MCF 10A (cell line): ENCODE measurements at regions of chrX and their contacts with region 1.

Region 1: DNA sequence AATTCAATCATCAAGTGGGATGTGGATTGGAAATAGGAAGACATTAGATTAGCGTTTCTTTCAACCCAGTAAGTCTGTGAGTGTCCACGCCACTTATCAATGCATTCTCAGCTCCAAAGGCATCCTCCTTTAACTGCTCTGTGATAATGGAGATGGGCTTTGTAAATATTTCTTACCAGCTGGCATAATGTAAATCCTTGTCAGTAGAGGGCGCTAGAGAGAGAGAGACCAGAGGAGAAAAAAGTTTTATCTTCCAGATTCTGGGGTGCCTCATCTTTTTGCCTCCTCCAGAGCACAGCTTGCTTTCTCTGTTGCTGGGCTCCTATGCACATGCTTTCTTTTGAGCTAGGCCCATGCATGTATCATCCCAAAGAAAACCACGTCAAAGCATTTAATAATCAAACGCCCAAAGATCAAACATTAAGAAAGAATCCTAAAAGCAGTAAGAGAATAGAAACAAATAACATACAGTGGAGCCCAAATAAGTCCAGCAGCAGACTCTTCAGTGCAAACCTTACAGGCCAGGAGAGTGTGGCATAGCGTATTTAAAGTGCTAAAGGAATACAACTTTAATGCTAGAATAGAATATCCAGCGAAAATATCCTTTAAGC is 9.6 kb upstream of the MTMR1 start:
- DNase-seq: peak; percentile 71
- H3K4me3 Mint-ChIP-seq: no peak overlapping the region
- H3K27ac Mint-ChIP-seq: no peak overlapping the region
- H3K4me1 Mint-ChIP-seq: no peaks in the 10 kb centered on the region
- H3K27me3 Mint-ChIP-seq: peaks cover 10% of the 10 kb centered on the region
- CTCF ChIP-seq: peak; percentile 54

Region 2: GRCh38 chrX:149950681-149951080 is 733.0 kb before region 1 on chrX:
- CTCF ChIA-PET with region 1: interaction called, 4 read pairs
- POLR2A ChIA-PET with region 1: no interaction called
- intact Hi-C with region 1: loop called (anchors 1 kb)
- DNase-seq: peak; percentile 65
- H3K4me3 Mint-ChIP-seq: no peak overlapping the region
- H3K27ac Mint-ChIP-seq: no peak overlapping the region
- H3K4me1 Mint-ChIP-seq: no peaks in the 10 kb centered on the region
- H3K27me3 Mint-ChIP-seq: peaks cover 16% of the 10 kb centered on the region
- CTCF ChIP-seq: peak; percentile 56

Region 3: DNA sequence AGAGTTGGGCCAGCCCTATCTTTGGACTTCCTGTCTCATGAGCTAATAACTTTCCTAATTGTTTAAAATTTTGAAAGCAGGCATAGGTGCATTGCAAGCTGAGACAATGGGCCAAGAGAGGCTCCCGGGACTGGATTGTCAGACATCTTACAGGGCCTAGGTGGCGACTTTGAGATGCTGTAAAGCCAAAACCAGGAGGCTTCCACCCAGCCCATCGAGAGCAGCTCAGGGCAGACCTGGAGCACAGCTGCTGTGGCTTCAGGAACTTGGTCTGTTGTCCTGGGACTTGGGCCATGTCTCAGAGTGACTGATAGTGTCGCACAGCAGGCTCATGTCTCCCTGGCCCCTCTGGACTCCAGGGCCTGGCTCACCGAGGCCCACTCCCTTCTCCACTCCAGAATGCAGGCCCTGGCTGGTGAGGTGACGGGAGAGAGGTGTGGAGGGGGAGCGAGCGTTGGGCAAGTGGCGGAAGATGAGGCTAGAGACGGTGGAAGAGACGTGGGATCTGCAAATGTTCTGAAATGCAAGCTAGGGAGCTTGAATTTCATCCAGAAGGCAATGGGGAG is 139.3 kb before region 1 on chrX:
- CTCF ChIA-PET with region 1: no interaction called
- POLR2A ChIA-PET with region 1: no interaction called
- intact Hi-C with region 1: loop called (anchors 1 kb)
- DNase-seq: peak; percentile 45
- H3K4me3 Mint-ChIP-seq: no peak overlapping the region
- H3K27ac Mint-ChIP-seq: no peak overlapping the region
- H3K4me1 Mint-ChIP-seq: peaks cover 11% of the 10 kb centered on the region
- H3K27me3 Mint-ChIP-seq: peaks cover 2% of the 10 kb centered on the region
- CTCF ChIP-seq: no peak

Region 4: GRCh38 chrX:150693775-150694574 is 10.3 kb after region 1 on chrX:
- CTCF ChIA-PET with region 1: interaction called, 11 read pairs
- POLR2A ChIA-PET with region 1: interaction called, 3 read pairs
- intact Hi-C with region 1: no loop called
- DNase-seq: peak; percentile 66
- H3K4me3 Mint-ChIP-seq: peak overlapping the region; percentile 75
- H3K27ac Mint-ChIP-seq: peak overlapping the region; percentile 69
- H3K4me1 Mint-ChIP-seq: peaks cover 14% of the 10 kb centered on the region
- H3K27me3 Mint-ChIP-seq: peaks cover 14% of the 10 kb centered on the region
- CTCF ChIP-seq: no peak

Region 5: DNA sequence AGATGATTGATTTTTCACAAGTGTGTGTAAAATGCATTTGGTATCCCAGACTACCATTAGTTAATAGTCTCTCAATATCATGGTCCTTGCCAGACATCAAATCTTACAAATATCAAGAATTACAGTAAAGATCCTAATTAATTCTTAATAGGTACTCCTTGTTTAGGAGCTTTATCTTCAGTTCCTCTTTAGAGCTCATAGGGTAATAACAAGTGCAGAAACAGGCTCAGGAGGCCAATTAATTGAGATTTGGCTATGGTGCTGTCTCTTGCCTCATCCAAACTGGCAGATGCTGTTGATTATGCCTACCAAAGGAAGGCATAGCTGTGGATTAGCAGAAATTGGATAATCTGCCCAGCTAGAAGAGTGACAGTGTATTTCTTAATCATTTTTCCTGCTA is 16.5 kb after region 1 on chrX:
- CTCF ChIA-PET with region 1: interaction called, 13 read pairs
- POLR2A ChIA-PET with region 1: no interaction called
- intact Hi-C with region 1: no loop called
- DNase-seq: no peak
- H3K4me3 Mint-ChIP-seq: no peak overlapping the region
- H3K27ac Mint-ChIP-seq: no peak overlapping the region
- H3K4me1 Mint-ChIP-seq: peaks cover 8% of the 10 kb centered on the region
- H3K27me3 Mint-ChIP-seq: peaks cover 17% of the 10 kb centered on the region
- CTCF ChIP-seq: no peak

Region 6: GRCh38 chrX:150715184-150715583 is 31.5 kb after region 1 on chrX:
- CTCF ChIA-PET with region 1: interaction called, 10 read pairs
- POLR2A ChIA-PET with region 1: interaction called, 6 read pairs
- intact Hi-C with region 1: loop called (anchors 1 kb)
- DNase-seq: peak; percentile 15
- H3K4me3 Mint-ChIP-seq: no peak overlapping the region
- H3K27ac Mint-ChIP-seq: no peak overlapping the region
- H3K4me1 Mint-ChIP-seq: no peaks in the 10 kb centered on the region
- H3K27me3 Mint-ChIP-seq: peaks cover 19% of the 10 kb centered on the region
- CTCF ChIP-seq: no peak

Region 7: GRCh38 chrX:150848914-150849365 is 165.3 kb after region 1 on chrX:
- CTCF ChIA-PET with region 1: no interaction called
- POLR2A ChIA-PET with region 1: no interaction called
- intact Hi-C with region 1: no loop called
- DNase-seq: peak; percentile 97
- H3K4me3 Mint-ChIP-seq: peak overlapping the region; percentile 24
- H3K27ac Mint-ChIP-seq: peak overlapping the region; percentile 98
- H3K4me1 Mint-ChIP-seq: peaks cover 35% of the 10 kb centered on the region
- H3K27me3 Mint-ChIP-seq: no peaks in the 10 kb centered on the region
- CTCF ChIP-seq: no peak

Region 8: DNA sequence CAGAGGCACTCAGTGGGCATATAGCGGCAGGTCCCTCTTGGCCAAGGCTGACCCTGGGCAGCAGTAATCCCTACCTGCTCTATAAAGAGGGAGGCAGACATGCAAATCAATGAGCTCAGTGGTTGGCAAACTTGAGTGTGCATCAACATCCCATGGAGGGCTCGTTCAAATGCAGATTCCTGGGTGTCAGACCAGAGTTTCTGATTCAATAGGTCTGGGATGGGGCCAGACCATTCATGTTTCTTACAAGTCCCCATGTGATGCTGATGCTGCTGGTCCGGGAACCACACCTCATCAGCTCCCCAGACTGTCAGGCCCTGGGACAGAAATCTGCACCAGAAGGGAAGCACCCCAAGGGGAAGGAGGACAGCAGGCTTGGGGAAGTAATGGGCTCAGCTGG is 260.6 kb after region 1 on chrX:
- CTCF ChIA-PET with region 1: no interaction called
- POLR2A ChIA-PET with region 1: no interaction called
- intact Hi-C with region 1: no loop called
- DNase-seq: no peak
- H3K4me3 Mint-ChIP-seq: no peak overlapping the region
- H3K27ac Mint-ChIP-seq: no peak overlapping the region
- H3K4me1 Mint-ChIP-seq: no peaks in the 10 kb centered on the region
- H3K27me3 Mint-ChIP-seq: no peaks in the 10 kb centered on the region
- CTCF ChIP-seq: no peak